ENCODE measurements at regions of chr6 and their contacts with region 1.

Region 1: GRCh38 chr6:105872246-105872645 is 213.9 kb upstream of the PRDM1 start:
- DNase-seq: no peak
- H3K4me3 ChIP-seq: no peak overlapping the region
- H3K27ac ChIP-seq: no peak overlapping the region
- H3K4me1 ChIP-seq: peaks cover 93% of the 10 kb centered on the region
- CTCF ChIP-seq: no peak

Region 2: DNA sequence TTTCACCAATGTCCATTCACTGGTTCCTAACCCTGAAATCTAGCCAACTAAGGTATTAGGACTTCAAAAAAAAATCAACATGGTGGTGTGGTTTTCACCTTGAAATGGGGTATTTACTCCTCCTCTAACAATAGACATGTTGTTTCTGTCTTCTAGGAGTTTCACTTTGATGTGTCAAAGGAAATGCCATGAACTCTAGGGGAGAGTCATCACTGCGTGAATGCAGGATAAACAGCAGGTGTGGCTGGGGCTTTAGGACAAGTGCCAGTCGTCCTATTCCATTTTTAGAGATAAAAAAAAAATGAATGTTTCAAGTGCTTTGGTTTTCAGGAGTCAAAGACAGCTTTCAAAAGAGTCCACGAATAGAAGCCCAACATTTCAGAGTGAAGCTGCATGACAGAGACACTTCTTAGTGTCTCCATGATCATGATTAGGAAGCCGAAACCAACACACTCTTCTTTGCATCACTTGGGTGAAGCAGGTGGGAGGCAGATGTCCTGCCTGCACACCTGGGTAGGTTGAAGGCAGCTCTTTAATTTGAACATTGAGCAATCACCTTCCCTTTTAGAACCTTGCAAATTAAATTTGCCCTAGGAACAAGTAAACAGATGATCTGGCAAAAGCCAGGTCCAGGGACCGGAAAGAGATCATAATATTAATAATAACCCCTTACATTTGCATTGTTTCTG is 114.6 kb before region 1 on chr6:
- CTCF ChIA-PET with region 1: interaction called, 3 read pairs
- POLR2A ChIA-PET with region 1: no interaction called
- intact Hi-C with region 1: loop called (anchors 5 kb)
- DNase-seq: peak; percentile 90
- H3K4me3 ChIP-seq: peak overlapping the region; percentile 47
- H3K27ac ChIP-seq: peak overlapping the region; percentile 84
- H3K4me1 ChIP-seq: peaks cover 50% of the 10 kb centered on the region
- CTCF ChIP-seq: no peak

Region 3: GRCh38 chr6:105793130-105793529 is 79.1 kb before region 1 on chr6:
- CTCF ChIA-PET with region 1: no interaction called
- POLR2A ChIA-PET with region 1: no interaction called
- intact Hi-C with region 1: loop called (anchors 5 kb)
- DNase-seq: peak; percentile 81
- H3K4me3 ChIP-seq: peak overlapping the region; percentile 2
- H3K27ac ChIP-seq: peak overlapping the region; percentile 35
- H3K4me1 ChIP-seq: peaks cover 56% of the 10 kb centered on the region
- CTCF ChIP-seq: peak; percentile 69

Region 4: DNA sequence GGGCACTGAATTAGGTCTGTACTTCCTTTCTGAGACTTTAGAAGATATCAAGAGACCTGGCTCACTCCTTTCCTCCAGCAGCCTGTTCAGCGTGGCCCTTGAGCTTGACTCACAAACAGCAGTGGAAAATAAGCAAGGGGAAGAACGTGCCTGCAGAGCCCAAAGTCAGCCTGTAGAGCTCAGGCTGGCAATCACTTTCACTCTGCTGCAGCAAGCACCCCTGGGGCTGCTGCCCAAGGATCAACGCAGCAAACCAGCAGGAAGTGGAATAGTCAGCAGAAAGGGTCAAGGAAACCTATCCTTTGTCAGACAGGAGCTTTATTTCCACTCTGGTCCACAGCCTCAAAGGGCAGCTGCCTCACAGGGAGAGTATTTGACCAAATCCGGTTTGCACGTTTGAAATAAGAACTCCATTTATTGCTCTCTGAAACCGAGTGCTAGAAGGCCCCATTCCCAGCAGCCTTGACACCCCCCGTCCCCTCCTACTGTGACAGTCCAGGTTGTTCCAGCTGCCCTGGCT is 291.3 kb after region 1 on chr6:
- CTCF ChIA-PET with region 1: no interaction called
- POLR2A ChIA-PET with region 1: no interaction called
- intact Hi-C with region 1: loop called (anchors 10 kb)
- DNase-seq: peak; percentile 74
- H3K4me3 ChIP-seq: peak overlapping the region; percentile 34
- H3K27ac ChIP-seq: peak overlapping the region; percentile 73
- H3K4me1 ChIP-seq: peaks cover 58% of the 10 kb centered on the region
- CTCF ChIP-seq: no peak